ENCODE measurements at regions of chr9 and their contacts with region 1.

Region 1: GRCh38 chr9:96654443-96655197 is 497 bp downstream of the PRXL2C start:
- DNase-seq: peak; percentile 65
- H3K4me3 Mint-ChIP-seq: peak overlapping the region; percentile 73
- H3K27ac Mint-ChIP-seq: peak overlapping the region; percentile 15
- H3K4me1 Mint-ChIP-seq: peaks cover 9% of the 10 kb centered on the region
- H3K27me3 Mint-ChIP-seq: no peaks in the 10 kb centered on the region

Region 2: DNA sequence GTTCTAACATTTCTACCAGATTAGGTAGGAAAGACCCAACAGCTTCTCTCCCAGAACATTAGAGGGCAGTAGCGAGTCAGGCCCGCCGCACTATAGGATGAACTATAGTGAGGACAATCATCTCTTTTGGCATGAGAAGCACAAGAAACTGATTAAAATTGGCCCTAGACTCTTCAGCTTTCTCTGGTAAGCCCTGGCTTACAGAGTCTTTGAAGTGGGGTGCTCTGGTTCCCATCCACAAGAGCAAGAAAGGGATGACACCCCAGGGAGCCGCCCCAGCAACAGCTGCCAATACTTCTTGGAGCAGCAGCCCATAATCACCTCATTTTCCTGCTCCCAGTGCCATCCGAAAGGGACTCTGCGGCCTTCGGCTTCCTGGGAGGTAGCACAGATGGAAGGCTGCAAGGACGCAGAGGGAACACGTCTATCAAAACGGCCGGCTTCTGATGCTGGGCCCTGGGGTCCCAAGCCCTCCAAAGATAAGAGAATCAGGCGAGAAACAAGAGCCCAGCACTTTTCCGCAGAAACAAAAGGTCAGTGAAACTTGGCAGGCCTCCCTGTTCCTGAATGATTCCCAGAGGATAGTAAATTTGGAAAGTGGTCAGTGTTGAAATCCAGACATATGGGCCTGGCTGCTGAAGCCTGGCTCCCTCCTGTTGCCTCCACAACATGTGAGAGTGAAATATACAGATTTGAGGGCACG is 421.9 kb before region 1 on chr9:
- CTCF ChIA-PET with region 1: no interaction called
- intact Hi-C with region 1: loop called (anchors 10 kb)
- DNase-seq: peak; percentile 57
- H3K4me3 Mint-ChIP-seq: no peak overlapping the region
- H3K27ac Mint-ChIP-seq: no peak overlapping the region
- H3K4me1 Mint-ChIP-seq: peaks cover 2% of the 10 kb centered on the region
- H3K27me3 Mint-ChIP-seq: peaks cover 25% of the 10 kb centered on the region

Region 3: DNA sequence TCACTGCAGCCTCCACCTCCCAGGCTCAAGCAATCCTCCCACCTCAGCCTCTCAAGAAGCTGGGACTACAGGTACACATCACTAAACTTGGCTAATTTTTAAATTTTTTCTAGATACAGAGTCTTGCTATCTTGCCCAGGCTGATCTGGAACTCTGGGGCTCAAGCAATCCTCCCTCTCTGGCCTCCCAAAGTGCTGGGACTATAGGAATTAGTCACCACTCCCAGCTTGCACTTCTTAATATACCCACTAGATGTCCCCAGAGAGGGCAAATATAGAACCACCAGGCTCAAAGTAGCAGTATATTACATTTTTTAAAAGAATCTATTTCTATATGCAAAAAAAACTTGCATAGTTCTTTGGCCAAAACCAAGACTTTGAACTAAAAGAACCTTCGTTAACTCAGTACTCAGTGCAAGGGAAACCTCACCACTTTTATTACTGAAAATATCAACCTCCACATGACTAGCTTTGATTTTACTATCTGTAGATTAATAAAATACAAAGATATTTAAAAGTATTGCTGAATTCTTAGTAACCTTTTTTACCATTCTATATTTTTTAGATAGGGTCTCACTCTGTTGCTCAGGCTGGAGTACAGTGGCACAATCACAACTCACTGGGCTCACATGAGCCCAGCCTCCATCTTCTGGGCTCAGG is 326.8 kb before region 1 on chr9:
- CTCF ChIA-PET with region 1: interaction called, 4 read pairs
- intact Hi-C with region 1: loop called (anchors 1 kb)
- DNase-seq: peak; percentile 70
- H3K4me3 Mint-ChIP-seq: no peak overlapping the region
- H3K27ac Mint-ChIP-seq: no peak overlapping the region
- H3K4me1 Mint-ChIP-seq: no peaks in the 10 kb centered on the region
- H3K27me3 Mint-ChIP-seq: no peaks in the 10 kb centered on the region

Region 4: GRCh38 chr9:96441798-96442445 is 212.7 kb before region 1 on chr9:
- CTCF ChIA-PET with region 1: interaction called, 9 read pairs
- intact Hi-C with region 1: loop called (anchors 1 kb)
- DNase-seq: peak; percentile 27
- H3K4me3 Mint-ChIP-seq: no peak overlapping the region
- H3K27ac Mint-ChIP-seq: no peak overlapping the region
- H3K4me1 Mint-ChIP-seq: peaks cover 2% of the 10 kb centered on the region
- H3K27me3 Mint-ChIP-seq: no peaks in the 10 kb centered on the region

Region 5: GRCh38 chr9:96449845-96450612 is 204.6 kb before region 1 on chr9 and contains the start of gene HABP4:
- CTCF ChIA-PET with region 1: interaction called, 3 read pairs
- intact Hi-C with region 1: loop called (anchors 1 kb)
- DNase-seq: peak; percentile 95
- H3K4me3 Mint-ChIP-seq: peak within 1 kb of the TSS; percentile 85
- H3K27ac Mint-ChIP-seq: peak within 1 kb of the TSS; percentile 66
- H3K4me1 Mint-ChIP-seq: peaks cover 29% of the 10 kb centered on the region
- H3K27me3 Mint-ChIP-seq: peaks cover 4% of the 10 kb centered on the region
- total RNA-seq, gene HABP4: 7.3 to 7.9 TPM

Region 6: DNA sequence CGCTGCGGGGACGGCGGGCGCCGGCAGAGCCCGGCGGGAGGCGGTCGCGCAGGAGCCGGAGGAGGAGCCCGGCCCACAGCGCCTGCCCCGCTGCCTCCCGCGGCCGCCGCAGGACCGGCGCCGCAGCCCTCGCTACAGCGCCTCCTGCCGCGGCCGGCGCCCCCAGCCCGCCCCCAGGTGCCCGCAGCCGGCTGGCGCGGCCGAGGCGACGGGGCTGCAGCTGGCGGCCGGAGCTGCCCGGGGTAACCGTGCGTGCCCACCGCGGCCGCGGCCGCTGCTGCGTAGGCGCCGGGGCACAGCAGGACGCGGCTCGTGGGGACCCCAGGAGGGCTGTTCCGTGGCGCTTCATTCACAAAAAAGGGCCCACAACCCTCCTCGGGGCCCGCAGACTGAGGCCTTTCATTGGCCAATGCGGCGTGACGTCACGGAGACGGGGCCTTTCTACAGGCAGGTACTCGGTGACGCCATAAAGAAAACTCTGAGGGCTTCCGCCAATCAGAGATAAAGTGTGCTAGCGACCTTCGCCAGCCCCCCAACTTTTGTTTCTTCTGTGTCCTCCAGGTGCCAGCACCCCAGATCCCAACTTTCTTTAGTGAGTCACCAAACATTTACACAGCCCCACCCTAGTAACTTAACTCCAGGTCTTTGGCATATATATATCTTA is 35.0 kb before region 1 on chr9 and contains the start of gene CDC14B:
- CTCF ChIA-PET with region 1: no interaction called
- intact Hi-C with region 1: loop called (anchors 2 kb)
- DNase-seq: peak; percentile 87
- H3K4me3 Mint-ChIP-seq: peak within 1 kb of the TSS; percentile 76
- H3K27ac Mint-ChIP-seq: no peak within 1 kb of the TSS
- H3K4me1 Mint-ChIP-seq: peaks cover 4% of the 10 kb centered on the region
- H3K27me3 Mint-ChIP-seq: peaks cover 35% of the 10 kb centered on the region
- total RNA-seq, gene CDC14B: 0.62 to 0.89 TPM

Region 7: DNA sequence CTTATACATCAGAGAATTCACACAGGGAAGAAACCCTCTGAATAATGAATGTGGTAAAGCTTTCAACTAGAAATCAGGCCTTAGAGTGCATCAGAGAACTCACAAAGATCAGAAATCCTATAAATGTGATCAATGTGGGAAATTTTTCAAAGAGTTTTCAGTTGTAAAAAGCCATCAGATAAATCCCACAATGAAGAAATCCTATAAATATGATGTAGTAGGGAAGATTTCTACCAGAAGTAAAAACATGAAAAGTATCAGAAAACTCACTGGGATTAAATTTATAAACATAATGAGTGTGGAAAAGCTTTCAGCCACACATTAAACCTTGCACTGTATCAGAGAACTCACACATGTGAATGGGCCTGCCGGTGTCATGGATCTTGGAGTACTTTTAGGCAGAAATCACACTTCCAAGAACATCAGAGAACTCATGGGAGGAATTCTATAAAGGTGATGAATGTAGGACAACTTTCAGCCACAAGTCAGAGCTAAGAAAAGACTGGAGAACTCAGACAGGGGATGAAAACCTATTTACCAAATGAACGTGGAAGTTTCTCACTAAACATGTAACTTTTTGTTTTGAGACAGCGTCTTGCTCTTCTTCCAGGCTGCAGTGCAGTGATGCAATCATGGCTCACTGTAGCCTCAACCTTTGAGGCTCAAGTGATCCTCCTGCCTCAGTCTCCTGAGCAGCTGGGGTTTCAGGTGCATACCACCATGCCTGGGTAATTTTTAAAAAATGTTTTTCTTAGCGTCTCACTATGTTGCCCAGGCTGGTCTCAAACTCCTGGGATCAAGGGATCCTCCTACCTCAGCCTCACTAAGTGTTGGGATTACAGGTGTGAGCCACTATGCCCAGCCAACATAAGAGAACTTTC is 83.8 kb after region 1 on chr9:
- CTCF ChIA-PET with region 1: no interaction called
- intact Hi-C with region 1: no loop called
- DNase-seq: no peak
- H3K4me3 Mint-ChIP-seq: no peak overlapping the region
- H3K27ac Mint-ChIP-seq: no peak overlapping the region
- H3K4me1 Mint-ChIP-seq: no peaks in the 10 kb centered on the region
- H3K27me3 Mint-ChIP-seq: peaks cover 2% of the 10 kb centered on the region

Measured in activated naive CD4-positive, alpha-beta T cell treated with anti-CD3 and anti-CD28 coated beads for 36 hours (primary cell).